Lower leg skin (tissue), 4 donors: ENCODE measurements at regions of chr5 and their contacts with region 1.

Region 1: DNA sequence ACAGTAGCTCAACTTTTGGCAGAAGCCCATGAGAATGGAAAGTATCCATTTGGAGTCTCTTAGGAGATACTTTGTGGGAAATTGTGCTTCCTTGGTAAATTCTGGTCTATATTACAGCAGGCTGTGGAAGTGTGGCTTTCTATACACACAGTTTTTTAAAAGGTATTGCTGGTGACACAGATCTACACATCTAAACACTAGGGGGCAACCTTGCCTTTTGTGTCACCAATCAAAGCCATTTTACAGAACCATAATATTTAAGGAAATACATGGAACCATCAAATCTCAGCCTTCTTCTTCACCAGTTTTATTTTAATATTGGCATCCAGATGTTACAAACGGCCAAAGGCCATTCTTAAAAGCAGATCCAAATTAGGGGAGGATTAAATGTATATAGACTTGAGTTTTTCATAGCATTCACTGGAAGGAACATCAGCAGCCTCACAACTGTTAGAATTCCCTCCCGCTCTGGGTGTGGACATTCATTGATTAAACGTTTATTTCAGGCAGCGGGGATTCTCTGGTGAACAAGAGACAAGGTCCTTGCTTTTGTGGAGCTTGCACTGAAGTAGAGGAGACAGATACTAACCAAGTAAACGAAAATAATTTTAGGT is 132.4 kb upstream of the EPB41L4A start:
- DNase-seq: peak in 1 of 2 donors; percentile 27
- H3K4me3 ChIP-seq: no peak overlapping the region
- CTCF ChIP-seq: peak in 1 of 3 donors; percentile 55
- POLR2A ChIP-seq: no peak

Region 2: DNA sequence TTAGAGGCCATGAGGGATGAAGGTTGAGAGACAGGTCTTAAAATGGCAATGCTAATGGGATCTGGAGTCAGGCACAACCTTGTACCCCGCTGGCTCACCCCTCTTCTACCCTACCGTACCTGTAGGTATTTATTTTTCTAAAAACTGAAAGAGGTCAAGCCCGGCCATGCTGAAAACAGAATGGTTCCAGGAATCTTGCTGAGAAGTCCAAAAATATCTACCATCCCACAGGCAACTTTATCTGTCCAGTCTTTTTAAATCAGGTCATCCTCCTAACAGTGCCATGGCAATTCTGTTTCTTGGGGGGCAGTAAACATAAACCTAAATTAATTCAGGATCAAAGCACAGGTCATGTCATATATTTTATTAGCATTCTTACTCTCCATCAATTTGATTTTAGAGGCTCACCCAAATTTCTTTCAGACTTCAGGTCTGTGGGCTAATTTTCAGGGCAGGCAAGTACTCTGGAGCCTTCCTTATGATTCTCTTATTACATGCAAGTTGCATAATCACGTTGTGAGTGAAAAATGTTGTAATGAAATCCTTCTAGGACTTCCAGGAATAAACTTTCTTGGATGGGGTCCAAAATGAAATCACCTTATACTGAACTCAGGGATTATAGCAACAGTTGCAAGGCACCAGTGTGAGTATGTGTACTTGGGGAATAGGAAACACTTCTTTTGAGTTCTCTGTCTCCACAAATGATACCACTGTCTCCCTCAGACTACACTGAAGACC is 691.8 kb before region 1 on chr5:
- intact Hi-C with region 1: no loop called
- DNase-seq: no peak
- H3K4me3 ChIP-seq: no peak overlapping the region
- CTCF ChIP-seq: no peak
- POLR2A ChIP-seq: no peak

Region 3: GRCh38 chr5:112757468-112758208 is 206.1 kb after region 1 on chr5:
- intact Hi-C with region 1: loop called (anchors 5 kb)
- DNase-seq: no peak
- H3K4me3 ChIP-seq: no peak overlapping the region
- CTCF ChIP-seq: peak in 1 of 3 donors; percentile 48
- POLR2A ChIP-seq: no peak

Region 4: DNA sequence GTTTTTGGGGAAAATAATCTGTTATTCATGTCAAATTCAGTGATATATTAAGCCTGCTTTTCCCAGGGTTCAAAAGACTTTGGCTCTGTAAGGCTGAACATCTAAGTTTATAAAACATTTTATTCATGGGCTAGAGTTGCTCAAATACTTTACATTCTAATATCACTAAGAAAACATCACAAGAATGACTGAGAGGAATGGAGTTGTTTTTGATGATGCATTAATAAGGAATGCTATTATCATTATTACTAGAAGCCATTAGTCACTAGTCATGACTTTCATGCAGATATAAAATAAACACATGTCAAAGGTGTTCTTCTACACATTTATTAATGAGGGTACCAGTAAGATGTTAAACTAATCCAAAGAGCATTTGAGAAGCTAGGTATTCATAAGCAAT is 1624.8 kb after region 1 on chr5:
- intact Hi-C with region 1: no loop called
- DNase-seq: no peak
- H3K4me3 ChIP-seq: no peak overlapping the region
- CTCF ChIP-seq: no peak
- POLR2A ChIP-seq: no peak